Esophagus muscularis mucosa (tissue), 4 donors: ENCODE measurements at regions of chr19 and their contacts with region 1.

Region 1: DNA sequence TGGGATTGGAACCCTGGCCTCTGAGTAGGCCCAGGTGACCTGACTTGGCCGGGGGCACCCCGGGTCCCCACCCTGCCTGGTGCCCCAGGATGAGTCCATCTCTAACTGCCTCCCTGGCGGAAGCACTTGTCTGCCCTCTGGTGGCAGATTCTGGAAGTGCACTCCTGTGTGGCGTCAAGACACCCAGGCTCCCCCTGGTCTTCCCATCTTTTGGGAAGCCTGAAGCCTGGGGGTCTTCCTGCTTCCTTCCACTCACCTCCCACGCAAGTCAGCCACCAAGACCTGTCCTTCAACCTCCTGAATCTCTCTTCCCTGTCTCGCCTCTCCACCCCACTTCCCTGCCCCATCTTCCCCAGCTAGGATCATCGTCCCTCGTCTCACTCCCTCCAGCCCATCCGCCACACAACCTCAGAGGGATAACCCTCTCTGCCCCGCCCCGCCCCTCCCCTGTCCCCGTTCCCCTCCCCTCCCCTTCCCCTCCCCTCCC is 7.4 kb downstream of the RABAC1 start:
- DNase-seq: no peak
- H3K4me3 ChIP-seq: no peak overlapping the region
- H3K27ac ChIP-seq: no peak overlapping the region
- H3K4me1 ChIP-seq: peaks cover 0 to 7% (median 4%) of the 10 kb centered on the region in 4 donors
- H3K27me3 ChIP-seq: peaks cover 0 to under 1% (median 0%) of the 10 kb centered on the region in 4 donors
- CTCF ChIP-seq: peak in 2 of 3 experiments; percentile 87 to 98
- EP300 ChIP-seq: no peak
- POLR2A ChIP-seq: no peak

Region 2: GRCh38 chr19:41837981-41838708 is 113.6 kb before region 1 on chr19:
- intact Hi-C with region 1: no loop called
- DNase-seq: no peak
- H3K4me3 ChIP-seq: no peak overlapping the region
- H3K27ac ChIP-seq: no peak overlapping the region
- H3K4me1 ChIP-seq: no peaks in the 10 kb centered on the region
- H3K27me3 ChIP-seq: peaks cover 0 to 57% (median 3%) of the 10 kb centered on the region in 4 donors
- CTCF ChIP-seq: no peak
- EP300 ChIP-seq: no peak
- POLR2A ChIP-seq: no peak

Region 3: DNA sequence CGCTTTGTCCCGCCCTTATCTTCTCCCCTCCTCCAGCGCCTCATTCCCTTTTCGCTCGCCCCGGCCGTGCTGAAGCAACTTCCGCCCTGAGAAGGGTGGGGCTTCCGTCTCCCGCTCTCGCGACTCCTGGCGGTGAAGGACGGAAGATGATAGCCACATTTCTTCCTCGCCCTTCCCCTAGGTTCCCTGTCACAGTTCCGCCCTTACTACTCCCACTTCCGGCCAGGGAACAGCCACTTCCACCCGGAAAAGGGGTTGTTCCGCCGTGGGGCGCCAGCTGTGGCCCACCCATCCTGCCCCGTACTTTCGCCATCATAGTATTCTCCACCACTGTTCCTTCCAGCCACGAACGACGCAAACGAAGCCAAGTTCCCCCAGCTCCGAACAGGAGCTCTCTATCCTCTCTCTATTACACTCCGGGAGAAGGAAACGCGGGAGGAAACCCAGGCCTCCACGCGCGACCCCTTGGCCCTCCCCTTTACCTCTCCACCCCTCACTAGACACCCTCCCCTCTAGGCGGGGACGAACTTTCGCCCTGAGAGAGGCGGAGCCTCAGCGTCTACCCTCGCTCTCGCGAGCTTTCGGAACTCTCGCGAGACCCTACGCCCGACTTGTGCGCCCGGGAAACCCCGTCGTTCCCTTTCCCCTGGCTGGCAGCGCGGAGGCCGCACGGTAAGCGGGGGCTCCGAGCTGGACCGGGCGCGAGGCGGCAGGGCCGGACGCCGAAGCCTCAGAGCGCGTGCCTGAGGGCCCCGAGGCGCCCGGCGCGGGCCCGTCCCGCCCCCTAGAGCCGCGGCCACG is 91.9 kb before region 1 on chr19 and contains the start of gene RPS19:
- intact Hi-C with region 1: loop called (anchors 5 kb)
- DNase-seq: peak; percentile 99
- H3K4me3 ChIP-seq: peak within 1 kb of the TSS; percentile 71 to 99 (median 88)
- H3K27ac ChIP-seq: peak within 1 kb of the TSS; percentile 92 to 96 (median 94)
- H3K4me1 ChIP-seq: peaks cover 29 to 51% (median 43%) of the 10 kb centered on the region in 4 donors
- H3K27me3 ChIP-seq: peaks cover 0 to 8% (median 1%) of the 10 kb centered on the region in 4 donors
- CTCF ChIP-seq: peak; percentile 31 to 77 (median 61)
- EP300 ChIP-seq: no peak
- POLR2A ChIP-seq: peak; percentile 44
- total RNA-seq, gene RPS19: 893 to 1,378 (median 1,179) TPM

Region 4: GRCh38 chr19:42497492-42498168 is 545.9 kb after region 1 on chr19:
- intact Hi-C with region 1: no loop called
- DNase-seq: no peak
- H3K4me3 ChIP-seq: no peak overlapping the region
- H3K27ac ChIP-seq: peak overlapping the region in 1 of 4 donors; percentile 4
- H3K4me1 ChIP-seq: peaks cover 0 to 9% (median 2%) of the 10 kb centered on the region in 4 donors
- H3K27me3 ChIP-seq: no peaks in the 10 kb centered on the region
- CTCF ChIP-seq: no peak
- EP300 ChIP-seq: no peak
- POLR2A ChIP-seq: no peak